Left ventricle myocardium superior (tissue), 1 donor: ENCODE measurements at regions of chr19 and their contacts with region 1.

Region 1: DNA sequence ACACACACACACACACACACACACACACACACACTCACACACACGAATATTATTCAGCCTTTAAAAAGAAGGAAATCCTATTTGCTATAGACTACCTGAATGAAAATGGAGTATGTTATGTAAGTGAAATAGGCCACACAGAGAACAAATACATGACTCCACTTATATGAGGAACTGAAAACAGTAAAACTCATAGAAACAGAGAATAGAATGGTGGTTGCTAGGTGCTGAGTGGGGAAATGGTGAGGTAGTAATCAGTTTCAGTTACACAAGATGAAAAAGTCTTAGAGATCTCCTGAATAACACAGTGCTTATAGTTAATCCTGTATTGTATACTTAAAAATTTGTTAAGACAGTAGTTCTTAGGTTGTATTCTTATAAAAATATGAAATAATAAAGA is 8.2 kb downstream of the ZNF677 start:
- DNase-seq: no peak
- ATAC-seq: no peak

Region 2: GRCh38 chr19:52665529-52665928 is 581.0 kb before region 1 on chr19:
- intact Hi-C with region 1: no loop called
- DNase-seq: no peak
- ATAC-seq: no peak

Region 3: DNA sequence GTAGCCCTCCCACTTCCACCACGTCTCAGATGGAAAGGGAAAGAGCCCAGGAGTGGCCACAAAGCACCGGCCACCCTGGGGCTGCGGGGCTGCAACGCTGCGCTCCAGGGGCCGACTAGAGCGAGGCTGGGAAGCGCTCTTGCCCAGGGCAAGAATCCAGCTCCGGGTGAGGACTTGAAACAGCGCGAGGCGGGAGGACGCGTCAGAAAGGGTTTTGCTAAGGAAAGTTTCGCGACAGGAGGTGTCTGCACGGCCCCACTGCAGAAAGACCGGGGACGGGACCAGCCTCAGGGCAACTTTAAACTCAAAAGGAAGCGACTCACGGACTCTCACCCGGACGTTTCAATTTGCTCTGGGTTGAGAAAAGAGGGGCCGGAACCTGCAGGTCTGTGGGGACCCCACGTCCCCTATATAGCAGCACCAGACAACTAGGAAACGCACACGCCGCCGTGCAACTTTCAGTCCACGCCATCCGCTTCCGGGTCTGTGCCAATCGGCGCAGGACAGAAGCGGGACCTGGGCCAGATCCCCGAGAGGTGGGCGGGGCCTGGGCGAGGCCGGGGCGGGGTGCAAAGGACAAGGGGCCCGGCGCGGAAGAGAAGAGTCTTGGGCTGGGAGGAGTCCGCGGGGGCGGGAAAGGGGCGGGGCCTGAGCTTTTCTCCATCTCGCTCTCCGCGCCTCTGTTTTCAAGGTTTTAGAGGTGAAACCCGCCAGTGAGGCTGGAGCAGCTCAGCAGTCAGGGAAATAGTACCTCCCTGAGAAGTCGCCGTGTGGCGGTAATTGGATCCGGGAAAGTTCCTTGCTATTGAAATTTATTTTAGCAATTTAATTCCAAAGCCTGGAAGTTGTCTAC is 283.9 kb before region 1 on chr19 and contains the start of gene ZNF816:
- intact Hi-C with region 1: no loop called
- DNase-seq: peak; percentile 99
- ATAC-seq: peak; percentile 100
- total RNA-seq, gene ZNF816: 4.4 TPM

Region 4: DNA sequence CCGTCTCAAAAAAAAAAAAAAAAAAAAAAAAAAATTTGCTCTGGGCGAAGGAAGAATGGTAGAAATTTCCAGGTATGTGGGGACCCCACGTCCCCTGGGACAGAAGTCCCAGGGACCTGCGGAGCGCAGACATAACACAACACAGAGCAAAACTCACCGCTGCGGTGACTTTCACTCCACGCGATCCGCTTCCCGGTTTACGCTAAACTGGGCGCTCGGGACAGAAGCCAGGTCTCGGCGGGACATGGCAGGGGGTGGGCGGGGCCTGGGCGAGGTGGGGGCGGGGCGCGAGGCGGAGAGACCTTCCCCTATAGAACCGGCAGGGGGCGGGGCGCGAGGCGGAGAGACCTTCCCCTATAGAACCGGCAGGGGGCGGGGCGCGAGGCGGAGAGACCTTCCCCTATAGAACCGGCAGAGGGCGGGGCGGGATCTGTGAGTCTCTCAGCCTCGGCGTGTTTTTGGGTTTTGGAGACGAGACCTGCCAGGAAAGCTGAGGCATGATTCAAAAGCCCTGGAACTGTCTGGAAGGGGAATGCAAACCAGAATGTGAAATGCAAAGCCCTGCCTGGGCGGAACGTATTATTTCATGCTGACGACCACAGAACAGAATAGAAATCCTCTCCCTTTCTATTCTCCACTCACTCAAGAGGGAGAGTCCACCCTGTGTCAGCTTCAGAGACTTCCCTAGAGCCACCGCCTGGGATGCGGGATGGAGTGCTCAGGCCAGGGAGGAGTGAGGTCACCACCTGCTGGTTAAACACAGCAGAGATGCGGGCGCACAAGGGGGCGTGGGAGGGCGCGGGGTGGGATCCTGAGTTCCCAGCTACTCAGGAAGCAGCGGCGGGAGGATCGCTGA is 252.9 kb before region 1 on chr19:
- intact Hi-C with region 1: no loop called
- DNase-seq: peak; percentile 87
- ATAC-seq: peak; percentile 97

Region 5: GRCh38 chr19:53007611-53008010 is 238.9 kb before region 1 on chr19:
- intact Hi-C with region 1: loop called (anchors 5 kb)
- DNase-seq: no peak
- ATAC-seq: peak; percentile 30

Region 6: GRCh38 chr19:53183146-53183764 is 63.2 kb before region 1 on chr19:
- intact Hi-C with region 1: no loop called
- DNase-seq: no peak
- ATAC-seq: no peak